Calu3 (cell line): ENCODE measurements at regions of chr18 and their contacts with region 1.

Region 1: GRCh38 chr18:33606621-33607020 is 28.6 kb downstream of the ASXL3 start:
- DNase-seq: no peak
- H3K4me3 Mint-ChIP-seq: no peak overlapping the region
- H3K27ac Mint-ChIP-seq: no peak overlapping the region
- H3K4me1 Mint-ChIP-seq: peaks cover 31% of the 10 kb centered on the region
- H3K27me3 Mint-ChIP-seq: no peaks in the 10 kb centered on the region
- CTCF ChIP-seq: no peak

Region 2: DNA sequence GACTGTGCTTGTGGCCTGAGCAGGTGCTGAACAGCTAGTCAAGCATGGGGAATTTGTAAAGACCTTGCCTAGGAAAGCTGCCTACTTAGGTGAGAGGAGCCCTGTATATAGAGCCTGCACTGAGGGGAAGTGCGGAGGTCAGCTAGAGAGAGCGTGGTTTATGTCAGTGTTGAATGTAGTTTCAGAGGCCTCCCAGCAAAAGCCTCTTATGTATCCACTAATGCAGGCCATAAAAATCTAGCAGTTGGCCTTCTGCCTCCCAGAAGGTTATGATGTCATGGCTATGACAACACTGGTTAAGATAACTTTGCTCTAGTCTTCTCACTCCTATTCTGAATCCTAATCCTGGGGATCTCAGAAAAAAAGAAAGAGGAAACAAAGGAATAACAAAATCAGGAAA is 60.3 kb after region 1 on chr18:
- CTCF ChIA-PET with region 1: no interaction called
- intact Hi-C with region 1: loop called (anchors 10 kb)
- DNase-seq: no peak
- H3K4me3 Mint-ChIP-seq: no peak overlapping the region
- H3K27ac Mint-ChIP-seq: no peak overlapping the region
- H3K4me1 Mint-ChIP-seq: no peaks in the 10 kb centered on the region
- H3K27me3 Mint-ChIP-seq: no peaks in the 10 kb centered on the region
- CTCF ChIP-seq: no peak

Region 3: DNA sequence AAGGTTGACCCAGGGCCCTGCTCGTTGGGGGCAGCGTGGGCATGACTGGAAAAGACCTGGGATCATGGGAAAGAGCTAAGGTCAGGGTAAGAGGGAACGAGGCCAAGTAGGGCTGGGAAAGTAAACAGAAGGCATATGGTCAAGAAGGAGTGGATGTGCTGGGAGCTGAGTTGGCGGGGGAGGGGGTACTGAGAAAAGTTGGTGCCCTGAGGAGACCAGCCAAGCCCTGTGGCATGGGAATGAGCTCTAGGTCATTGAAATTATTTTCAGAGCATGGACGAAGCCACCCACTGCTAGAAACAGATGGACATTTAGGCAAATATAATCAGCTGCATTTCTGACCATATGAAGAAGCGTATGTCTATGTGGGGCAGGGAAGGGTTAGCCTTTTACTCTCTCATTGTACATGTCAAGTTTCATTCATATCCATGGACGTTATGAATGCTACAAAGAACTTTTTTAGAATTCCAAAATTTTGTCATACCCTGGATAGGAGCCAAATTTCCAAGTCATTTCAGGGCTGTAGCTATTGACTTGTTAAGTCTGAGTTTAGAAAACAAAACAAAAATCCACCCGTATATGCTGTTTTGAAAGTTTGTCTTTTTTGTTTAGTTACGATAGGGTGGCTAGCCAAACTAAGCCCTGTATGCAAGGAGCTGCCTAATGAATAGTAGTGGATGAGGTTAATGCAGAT is 1453.6 kb after region 1 on chr18:
- CTCF ChIA-PET with region 1: no interaction called
- intact Hi-C with region 1: no loop called
- DNase-seq: no peak
- H3K4me3 Mint-ChIP-seq: no peak overlapping the region
- H3K27ac Mint-ChIP-seq: no peak overlapping the region
- H3K4me1 Mint-ChIP-seq: peaks cover 8% of the 10 kb centered on the region
- H3K27me3 Mint-ChIP-seq: no peaks in the 10 kb centered on the region
- CTCF ChIP-seq: no peak